Right cardiac atrium (tissue), 5 donors: ENCODE measurements at regions of chr14 and their contacts with region 1.

Region 1: DNA sequence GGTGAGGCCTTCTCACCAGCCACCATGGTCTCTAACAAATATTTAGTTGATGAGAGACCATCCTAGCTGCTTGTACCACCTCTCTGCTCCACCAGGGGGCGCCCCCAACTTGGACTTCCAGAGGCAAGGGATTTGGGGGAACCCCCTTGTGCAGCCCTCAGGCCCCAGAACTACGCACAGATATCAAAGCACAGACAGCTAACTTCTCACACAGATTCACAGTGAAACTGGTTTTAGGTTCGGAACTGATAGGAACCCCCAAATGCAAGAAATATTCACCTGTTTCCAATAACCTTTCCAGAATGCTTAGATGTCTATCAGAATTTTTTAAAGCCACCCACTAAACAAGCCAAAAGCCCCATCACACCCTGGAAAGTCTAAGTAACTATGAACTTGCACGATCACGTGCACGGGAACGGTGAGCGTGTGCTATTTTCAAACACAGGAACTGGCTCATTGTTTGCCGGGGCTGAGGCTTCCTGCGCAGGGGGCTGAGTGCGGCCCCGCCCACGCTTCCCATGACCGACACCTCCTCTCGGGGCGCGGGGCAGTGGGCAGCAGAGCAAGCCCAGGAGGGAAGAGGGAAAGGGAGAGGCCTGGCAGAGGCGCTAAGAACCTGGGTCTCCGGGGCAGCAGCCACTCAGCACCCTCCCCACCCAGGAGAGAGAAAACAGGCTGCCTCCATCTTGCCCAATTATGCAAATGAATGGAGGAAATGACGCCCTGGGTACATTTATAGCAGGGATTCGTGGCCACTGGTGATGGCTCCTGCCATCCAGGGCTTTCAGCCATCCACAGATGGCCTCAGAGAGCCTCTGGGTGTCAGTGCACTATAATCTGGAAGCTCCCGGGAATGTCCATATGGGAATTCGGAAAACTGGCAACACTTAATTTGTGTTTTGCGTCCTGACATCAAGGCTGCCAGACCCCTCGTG is 79.4 kb upstream of the GPR68 start:
- DNase-seq: peak; percentile 88 to 95 (median 93)
- ATAC-seq: peak; percentile 82 to 94
- H3K4me3 ChIP-seq: peak overlapping the region; percentile 45
- H3K27ac ChIP-seq: peak overlapping the region; percentile 65
- H3K4me1 ChIP-seq: peaks cover 10% of the 10 kb centered on the region
- H3K27me3 ChIP-seq: no peaks in the 10 kb centered on the region

Region 2: GRCh38 chr14:91418387-91419043 is 94.6 kb after region 1 on chr14:
- intact Hi-C with region 1: loop called (anchors 2 kb)
- DNase-seq: peak; percentile 70 to 88 (median 87)
- ATAC-seq: peak; percentile 69 to 75
- H3K4me3 ChIP-seq: peak overlapping the region; percentile 80
- H3K27ac ChIP-seq: no peak overlapping the region
- H3K4me1 ChIP-seq: no peaks in the 10 kb centered on the region
- H3K27me3 ChIP-seq: no peaks in the 10 kb centered on the region